ENCODE measurements at regions of chr3 and their contacts with region 1.

Region 1: GRCh38 chr3:159130108-159130507 is 328.3 kb downstream of the MFSD1 start:
- DNase-seq: peak; percentile 11
- CTCF ChIP-seq: peak; percentile 33

Region 2: GRCh38 chr3:158976966-158977365 is 153.1 kb before region 1 on chr3:
- CTCF ChIA-PET with region 1: no interaction called
- POLR2A ChIA-PET with region 1: no interaction called
- DNase-seq: no peak
- CTCF ChIP-seq: no peak

Region 3: GRCh38 chr3:159146856-159147435 is 16.8 kb after region 1 on chr3:
- CTCF ChIA-PET with region 1: interaction called, 10 read pairs
- POLR2A ChIA-PET with region 1: no interaction called
- DNase-seq: no peak
- CTCF ChIP-seq: no peak

Region 4: GRCh38 chr3:159252772-159253384 is 122.8 kb after region 1 on chr3:
- CTCF ChIA-PET with region 1: interaction called, 39 read pairs
- POLR2A ChIA-PET with region 1: no interaction called
- DNase-seq: peak; percentile 24
- CTCF ChIP-seq: peak; percentile 54